ENCODE measurements at regions of chr6 and their contacts with region 1.

Region 1: GRCh38 chr6:17994019-17994418 is 6.6 kb upstream of the KIF13A start:
- DNase-seq: no peak
- H3K4me3 Mint-ChIP-seq: no peak overlapping the region
- H3K27ac Mint-ChIP-seq: no peak overlapping the region
- H3K4me1 Mint-ChIP-seq: no peaks in the 10 kb centered on the region
- H3K27me3 Mint-ChIP-seq: peaks cover 27% of the 10 kb centered on the region

Region 2: DNA sequence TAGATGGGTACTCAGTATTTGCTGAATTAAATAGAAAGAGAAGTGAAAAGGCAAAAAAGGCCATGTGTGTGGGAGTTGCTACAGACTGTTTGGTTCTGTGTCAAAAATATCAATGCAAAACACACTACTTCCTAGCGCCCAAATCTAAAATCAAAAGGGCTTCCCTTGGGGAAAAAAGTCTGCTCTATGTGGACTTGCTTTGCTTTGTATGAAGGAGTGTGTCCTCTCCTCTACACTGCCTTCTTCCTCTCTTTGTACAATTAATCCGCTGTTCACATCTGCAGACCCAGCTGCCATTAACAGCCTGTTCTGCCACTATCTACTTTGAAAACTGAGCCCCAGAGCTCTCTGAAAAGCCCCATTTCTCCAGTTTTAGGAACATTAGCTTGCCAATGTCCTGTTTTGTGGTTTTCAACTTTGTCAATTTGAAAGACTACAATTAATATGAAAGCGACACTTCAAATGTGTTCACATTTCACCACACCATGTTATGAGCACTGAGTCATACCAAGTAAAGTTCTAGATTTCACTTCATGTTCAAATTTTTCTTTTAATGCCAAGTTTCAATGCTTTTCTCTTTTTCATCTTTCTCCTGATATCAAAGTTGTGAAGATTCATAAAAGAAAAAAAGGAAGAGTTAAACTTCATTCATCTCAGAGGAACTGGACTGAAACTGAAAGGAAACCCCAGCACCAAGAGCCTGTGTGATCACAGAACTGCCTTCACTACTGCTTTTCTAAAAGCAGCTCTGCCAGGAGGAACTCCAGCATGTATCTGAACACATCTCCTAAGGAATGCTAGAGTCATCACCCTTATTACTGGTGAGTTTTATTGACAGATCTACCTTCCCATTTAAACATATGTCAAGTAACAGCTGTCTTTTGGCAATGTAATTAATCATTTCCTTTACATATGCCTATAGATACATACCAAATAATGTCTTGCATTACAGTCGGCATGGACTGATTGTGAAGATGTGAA is 109.2 kb before region 1 on chr6:
- intact Hi-C with region 1: loop called (anchors 5 kb)
- DNase-seq: no peak
- H3K4me3 Mint-ChIP-seq: no peak overlapping the region
- H3K27ac Mint-ChIP-seq: no peak overlapping the region
- H3K4me1 Mint-ChIP-seq: peaks cover 12% of the 10 kb centered on the region
- H3K27me3 Mint-ChIP-seq: peaks cover 33% of the 10 kb centered on the region

Region 3: GRCh38 chr6:17962436-17963031 is 31.5 kb before region 1 on chr6:
- intact Hi-C with region 1: no loop called
- DNase-seq: no peak
- H3K4me3 Mint-ChIP-seq: no peak overlapping the region
- H3K27ac Mint-ChIP-seq: no peak overlapping the region
- H3K4me1 Mint-ChIP-seq: no peaks in the 10 kb centered on the region
- H3K27me3 Mint-ChIP-seq: peaks cover 16% of the 10 kb centered on the region